IMR-90 (cell line): ENCODE measurements at regions of chr5 and their contacts with region 1.

Region 1: GRCh38 chr5:111550279-111551020 is 38.1 kb upstream of the STARD4 start:
- DNase-seq: peak; percentile 99
- ATAC-seq: peak; percentile 96
- H3K4me3 ChIP-seq: no peak overlapping the region
- H3K27ac ChIP-seq: no peak overlapping the region
- H3K4me1 ChIP-seq: no peaks in the 10 kb centered on the region; the same call in 1 of the 2 replicates
- H3K27me3 ChIP-seq: no peaks in the 10 kb centered on the region
- CTCF ChIP-seq: peak; percentile 81
- POLR2A ChIP-seq: no peak
- RAD21 ChIP-seq: peak; percentile 91

Region 2: GRCh38 chr5:110872200-110872599 is 678.2 kb before region 1 on chr5:
- CTCF ChIA-PET with region 1: no interaction called
- POLR2A ChIA-PET with region 1: no interaction called
- dilution Hi-C with region 1: no loop called
- in situ Hi-C with region 1: no loop called
- intact Hi-C with region 1: no loop called
- DNase-seq: no peak
- ATAC-seq: no peak
- H3K4me3 ChIP-seq: no peak overlapping the region
- H3K27ac ChIP-seq: no peak overlapping the region
- H3K4me1 ChIP-seq: no peaks in the 10 kb centered on the region
- H3K27me3 ChIP-seq: no peaks in the 10 kb centered on the region; the same call in 1 of the 2 replicates
- CTCF ChIP-seq: no peak
- POLR2A ChIP-seq: no peak
- RAD21 ChIP-seq: no peak

Region 3: GRCh38 chr5:111680737-111681413 is 130.4 kb after region 1 on chr5:
- CTCF ChIA-PET with region 1: interaction called, 3 read pairs
- POLR2A ChIA-PET with region 1: no interaction called
- dilution Hi-C with region 1: no loop called
- in situ Hi-C with region 1: no loop called
- intact Hi-C with region 1: loop called (anchors 5 kb)
- DNase-seq: peak; percentile 97
- ATAC-seq: peak; percentile 82
- H3K4me3 ChIP-seq: no peak overlapping the region
- H3K27ac ChIP-seq: peak overlapping the region; percentile 68; the same call in 1 of the 2 replicates
- H3K4me1 ChIP-seq: peaks cover 17% of the 10 kb centered on the region
- H3K27me3 ChIP-seq: no peaks in the 10 kb centered on the region
- CTCF ChIP-seq: no peak
- POLR2A ChIP-seq: no peak
- RAD21 ChIP-seq: no peak

Region 4: GRCh38 chr5:111853748-111854147 is 303.3 kb after region 1 on chr5:
- CTCF ChIA-PET with region 1: interaction called, 3 read pairs
- POLR2A ChIA-PET with region 1: no interaction called
- dilution Hi-C with region 1: no loop called
- in situ Hi-C with region 1: no loop called
- intact Hi-C with region 1: loop called (anchors 10 kb)
- DNase-seq: peak; percentile 62
- ATAC-seq: peak; percentile 28
- H3K4me3 ChIP-seq: no peak overlapping the region
- H3K27ac ChIP-seq: no peak overlapping the region
- H3K4me1 ChIP-seq: peaks cover 9% of the 10 kb centered on the region
- H3K27me3 ChIP-seq: no peaks in the 10 kb centered on the region
- CTCF ChIP-seq: no peak
- POLR2A ChIP-seq: no peak
- RAD21 ChIP-seq: no peak

Region 5: DNA sequence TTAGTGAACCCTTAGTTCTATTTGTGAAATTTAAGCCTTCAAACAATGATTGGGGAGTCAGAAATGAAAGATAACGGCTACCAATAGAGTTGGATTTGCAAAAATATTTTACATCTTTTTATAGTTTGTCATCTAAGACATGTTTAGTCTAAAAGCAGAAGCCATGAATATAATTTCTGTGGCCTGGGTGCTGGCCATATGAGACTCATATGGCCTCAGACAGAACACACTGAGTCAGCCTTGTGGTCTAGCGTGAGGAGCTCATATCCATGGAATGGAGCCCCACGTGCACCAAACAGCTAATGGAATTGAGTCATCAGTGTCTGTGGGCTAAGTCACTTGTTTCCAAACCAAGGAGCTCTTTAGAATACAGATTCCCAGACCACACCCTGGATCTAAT is 447.3 kb after region 1 on chr5:
- CTCF ChIA-PET with region 1: no interaction called
- POLR2A ChIA-PET with region 1: no interaction called
- dilution Hi-C with region 1: no loop called
- in situ Hi-C with region 1: no loop called
- intact Hi-C with region 1: loop called (anchors 5 kb)
- DNase-seq: peak; percentile 100
- ATAC-seq: peak; percentile 87
- H3K4me3 ChIP-seq: no peak overlapping the region
- H3K27ac ChIP-seq: no peak overlapping the region
- H3K4me1 ChIP-seq: peaks cover 15% of the 10 kb centered on the region
- H3K27me3 ChIP-seq: no peaks in the 10 kb centered on the region
- CTCF ChIP-seq: no peak
- POLR2A ChIP-seq: no peak
- RAD21 ChIP-seq: 0 out of 2 replicates have a peak, but pooled peaks have one; percentile 7